Activated naive CD4-positive, alpha-beta T cell treated with anti-CD3 and anti-CD28 coated beads for 36 hours (primary cell): ENCODE measurements at regions of chr4 and their contacts with region 1.

Region 1: DNA sequence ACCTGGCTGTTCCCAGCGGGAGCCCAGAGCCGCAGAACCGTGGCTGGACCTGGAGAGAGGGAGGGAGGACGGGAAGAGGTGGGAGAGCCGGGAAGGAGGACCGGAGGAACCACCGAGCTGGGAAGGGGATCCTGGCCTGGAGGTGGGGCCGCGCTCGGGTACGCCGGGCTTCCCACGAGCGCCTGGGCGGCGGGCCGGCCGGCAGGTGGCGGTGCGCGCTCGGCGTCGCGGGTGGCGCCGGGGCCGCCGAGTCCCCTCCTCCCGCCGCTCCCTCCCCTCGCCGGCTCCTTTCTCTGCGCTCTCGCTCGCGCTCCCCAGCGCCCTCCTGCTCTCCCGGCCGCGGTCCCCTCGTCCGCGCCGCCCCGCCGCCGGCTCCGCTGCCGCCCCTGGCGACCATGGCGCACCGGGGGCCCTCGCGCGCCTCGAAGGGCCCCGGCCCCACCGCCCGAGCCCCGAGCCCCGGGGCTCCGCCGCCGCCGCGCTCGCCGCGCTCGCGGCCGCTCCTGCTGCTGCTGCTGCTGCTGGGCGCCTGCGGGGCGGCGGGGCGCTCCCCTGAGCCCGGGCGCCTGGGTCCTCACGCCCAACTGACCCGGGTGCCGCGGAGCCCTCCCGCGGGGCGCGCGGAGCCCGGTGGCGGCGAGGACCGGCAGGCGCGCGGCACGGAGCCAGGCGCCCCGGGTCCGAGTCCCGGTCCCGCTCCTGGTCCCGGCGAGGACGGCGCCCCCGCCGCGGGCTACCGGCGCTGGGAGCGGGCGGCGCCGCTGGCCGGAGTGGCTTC is at the start of gene SORCS2:
- DNase-seq: peak; percentile 40
- H3K4me3 Mint-ChIP-seq: peak within 1 kb of the TSS; percentile 4
- H3K27ac Mint-ChIP-seq: no peak within 1 kb of the TSS
- H3K4me1 Mint-ChIP-seq: peaks cover 1% of the 10 kb centered on the region
- H3K27me3 Mint-ChIP-seq: peaks cover 42% of the 10 kb centered on the region
- total RNA-seq, gene SORCS2: 0.07 to 0.15 TPM

Region 2: DNA sequence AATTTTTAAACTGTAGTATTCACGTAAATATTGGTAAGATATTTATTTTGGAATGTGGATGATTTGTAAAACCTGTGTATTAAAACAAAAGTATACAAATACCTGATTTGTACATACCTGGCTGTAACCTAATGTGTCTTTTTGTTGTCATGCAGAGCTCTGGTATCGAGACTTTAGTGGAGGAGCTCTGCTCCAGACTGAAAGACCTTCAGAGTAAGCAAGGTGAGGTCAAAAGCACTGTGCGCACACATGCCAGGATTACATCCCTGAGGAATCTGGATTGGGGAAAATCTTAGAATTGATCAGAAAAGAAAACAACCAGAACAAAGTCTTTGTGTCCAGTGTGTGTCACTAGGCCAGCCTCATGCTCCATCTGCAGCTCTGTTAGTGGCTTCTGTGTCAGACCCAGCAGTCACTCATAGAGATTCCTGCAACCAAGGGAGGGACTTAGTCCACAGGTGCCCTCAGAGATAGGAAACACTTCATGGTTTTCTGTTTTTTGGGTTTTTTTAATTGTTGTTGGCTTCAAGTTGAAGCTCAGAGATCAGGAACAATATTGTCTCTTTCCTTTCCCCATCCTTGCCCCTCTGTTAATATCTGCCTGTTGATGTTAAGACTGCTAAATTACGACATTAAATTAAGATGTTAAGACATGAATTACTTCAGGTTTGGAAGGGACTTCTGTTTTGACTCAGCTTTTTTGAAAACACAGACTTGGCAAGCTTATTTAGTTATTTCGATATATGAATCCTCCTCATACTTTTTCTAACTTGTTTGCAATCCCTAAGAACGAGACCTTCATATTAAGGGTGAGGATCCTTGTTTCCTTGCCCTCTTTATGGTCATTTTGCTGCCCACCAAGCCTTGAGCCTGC is 335.2 kb before region 1 on chr4:
- CTCF ChIA-PET with region 1: no interaction called
- intact Hi-C with region 1: no loop called
- DNase-seq: no peak
- H3K4me3 Mint-ChIP-seq: no peak overlapping the region
- H3K27ac Mint-ChIP-seq: no peak overlapping the region
- H3K4me1 Mint-ChIP-seq: peaks cover 27% of the 10 kb centered on the region
- H3K27me3 Mint-ChIP-seq: no peaks in the 10 kb centered on the region

Region 3: GRCh38 chr4:7335344-7336069 is 143.1 kb after region 1 on chr4:
- CTCF ChIA-PET with region 1: interaction called, 13 read pairs
- intact Hi-C with region 1: loop called (anchors 1 kb)
- DNase-seq: peak; percentile 78
- H3K4me3 Mint-ChIP-seq: no peak overlapping the region
- H3K27ac Mint-ChIP-seq: no peak overlapping the region
- H3K4me1 Mint-ChIP-seq: no peaks in the 10 kb centered on the region
- H3K27me3 Mint-ChIP-seq: no peaks in the 10 kb centered on the region

Region 4: DNA sequence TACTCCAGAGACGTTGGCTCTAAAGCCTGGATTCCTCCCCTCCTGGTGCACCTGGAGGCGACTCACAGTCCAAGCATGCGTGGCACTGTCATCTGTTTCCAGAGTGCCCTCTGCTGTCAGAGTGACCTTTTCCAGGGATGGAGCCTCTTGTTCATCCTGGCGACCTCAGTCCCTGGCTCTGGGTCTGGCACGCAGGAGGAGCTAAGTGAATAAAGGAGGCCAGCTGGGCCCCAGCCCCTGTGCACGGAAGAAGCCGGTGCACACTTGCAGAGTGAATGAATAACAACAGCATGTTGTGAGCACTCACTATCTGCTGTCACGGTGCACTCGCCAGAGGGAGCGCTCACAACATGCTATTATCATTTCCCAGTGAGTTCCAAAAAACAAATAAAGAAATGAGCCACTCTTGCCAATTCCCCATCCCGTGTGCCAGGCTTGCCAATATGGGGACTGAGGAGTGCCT is 270.1 kb after region 1 on chr4:
- CTCF ChIA-PET with region 1: no interaction called
- intact Hi-C with region 1: loop called (anchors 5 kb)
- DNase-seq: no peak
- H3K4me3 Mint-ChIP-seq: no peak overlapping the region
- H3K27ac Mint-ChIP-seq: no peak overlapping the region
- H3K4me1 Mint-ChIP-seq: no peaks in the 10 kb centered on the region
- H3K27me3 Mint-ChIP-seq: peaks cover 4% of the 10 kb centered on the region